ENCODE measurements at regions of chr9 and their contacts with region 1.

Region 1: DNA sequence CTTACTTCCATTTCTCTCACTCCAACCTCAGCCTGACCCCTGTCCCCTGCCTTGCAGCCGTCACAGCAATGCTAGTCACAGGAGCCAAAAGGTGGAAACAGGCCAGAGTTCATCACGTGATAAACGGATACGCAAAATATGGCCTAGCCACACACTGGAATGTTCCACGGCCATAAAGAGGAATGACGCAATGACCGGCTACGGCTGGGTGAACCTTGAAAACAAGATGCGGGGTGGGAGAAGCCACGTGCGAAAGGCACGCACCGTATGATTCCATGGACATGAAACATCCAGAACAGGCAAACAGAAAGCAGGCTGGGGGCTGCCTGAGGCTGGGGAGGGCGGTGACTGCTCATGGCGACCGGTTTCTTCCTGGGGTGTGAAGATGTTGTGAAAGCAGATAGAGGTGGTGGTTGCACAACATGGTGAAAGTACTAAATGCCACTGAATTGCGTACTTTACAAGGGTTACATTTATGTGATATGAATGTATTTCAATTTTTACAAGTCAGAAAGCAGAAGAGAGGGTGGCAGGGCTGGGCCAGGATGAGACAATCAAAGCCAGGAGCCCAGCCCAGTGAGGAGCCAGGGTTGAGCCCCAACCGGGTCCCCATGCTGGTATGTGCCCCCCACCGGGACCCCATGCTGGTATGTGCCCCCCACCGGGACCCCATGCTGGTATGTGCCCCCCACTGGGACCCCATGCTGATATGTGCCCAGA is 117.8 kb upstream of the SARDH start:
- DNase-seq: no peak

Region 2: GRCh38 chr9:133972041-133972941 is 116.3 kb after region 1 on chr9:
- intact Hi-C with region 1: loop called in 1 of 2 experiments (anchors 1 kb)
- DNase-seq: peak; percentile 78

Region 3: DNA sequence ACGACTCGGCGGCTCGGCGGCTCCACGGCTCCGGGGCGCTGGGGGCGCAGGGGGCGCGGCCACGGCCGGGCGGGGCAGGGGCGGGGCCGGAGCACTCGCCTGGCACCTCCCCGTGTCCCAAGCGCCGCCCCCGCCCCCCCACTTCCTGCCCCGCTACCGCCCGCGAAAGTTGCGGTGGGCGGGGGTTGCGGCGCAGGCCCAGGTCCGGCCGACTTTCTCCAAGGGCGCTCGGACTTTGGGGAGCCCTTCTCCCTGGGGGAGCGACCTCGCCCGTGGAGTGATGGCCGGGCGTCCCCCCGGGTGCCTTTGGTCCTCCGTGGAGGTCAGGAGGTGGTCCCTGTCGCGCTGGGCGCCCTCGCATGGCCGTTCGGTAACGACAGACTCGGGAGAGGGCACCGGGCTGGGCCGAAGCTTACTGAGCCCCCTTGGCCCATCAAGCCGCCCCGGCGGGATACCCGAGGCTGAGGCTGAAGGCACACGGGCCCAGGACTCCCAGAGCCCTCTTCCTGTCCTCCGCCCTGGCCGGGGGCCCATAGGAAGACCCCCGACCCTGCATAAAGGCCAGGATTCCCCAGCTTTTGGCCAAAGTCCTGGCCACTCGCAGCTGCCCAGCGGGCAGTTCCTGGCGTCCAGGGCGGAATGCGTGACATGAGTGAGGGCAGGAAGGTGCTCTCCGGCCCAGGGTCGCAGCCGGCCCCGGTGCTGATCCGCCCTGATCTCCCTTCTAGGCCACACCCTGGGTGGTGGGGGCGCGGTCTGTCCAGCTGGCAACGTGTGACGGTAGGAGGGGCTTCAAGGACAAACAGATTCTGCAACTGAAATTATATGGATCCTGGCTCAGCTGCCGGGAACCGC is 137.0 kb after region 1 on chr9:
- intact Hi-C with region 1: loop called in 1 of 2 experiments (anchors 5 kb)
- DNase-seq: peak; percentile 97